ENCODE measurements at regions of chr15 and their contacts with region 1.

Region 1: DNA sequence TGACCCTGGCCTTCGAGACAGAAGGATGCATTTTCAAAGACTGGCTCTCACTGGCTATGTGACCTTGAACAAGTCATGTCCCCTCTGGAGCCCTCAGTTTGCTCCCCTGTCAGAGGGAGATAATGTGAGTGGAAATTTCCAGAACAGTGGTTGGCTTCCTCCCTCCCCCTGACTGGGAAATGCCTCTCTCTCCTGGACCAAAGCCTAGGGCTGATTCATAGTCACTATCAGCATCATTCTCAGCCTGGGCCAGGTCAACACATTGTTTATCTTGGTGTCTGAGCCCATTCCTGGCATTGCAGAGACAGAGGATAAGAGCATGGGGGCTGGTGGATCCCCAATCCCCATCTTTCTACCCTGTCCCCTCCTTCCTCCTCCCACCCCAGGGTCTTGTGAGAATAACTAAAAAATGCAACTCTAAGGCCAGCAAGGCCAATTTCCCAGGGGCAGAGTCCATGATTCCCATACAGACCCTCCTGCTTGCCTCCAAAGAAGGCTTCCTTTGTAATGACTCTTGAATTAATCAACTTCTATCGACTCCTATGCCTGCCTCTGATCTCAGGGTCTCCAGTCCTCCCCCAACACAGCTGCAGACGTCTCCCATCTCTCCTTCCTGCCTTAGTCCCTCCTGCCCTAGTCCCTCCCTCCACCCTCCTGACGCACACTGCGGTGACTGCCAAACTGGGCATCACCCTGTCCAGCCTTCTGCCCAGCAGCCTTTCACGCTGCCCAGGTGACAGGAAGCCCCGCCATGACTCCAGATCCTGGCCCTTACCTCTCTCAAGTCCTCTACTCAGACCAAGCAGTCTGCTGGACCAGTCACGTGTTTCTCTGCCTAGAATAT is 35.4 kb upstream of the CORO2B start:
- DNase-seq: peak; percentile 73
- ATAC-seq: peak; percentile 89
- H3K4me3 ChIP-seq: no peak overlapping the region
- H3K27ac ChIP-seq: peak overlapping the region in 1 of 2 donors; percentile 52
- H3K4me1 ChIP-seq: peaks cover 3 to 5% of the 10 kb centered on the region in 2 donors
- H3K27me3 ChIP-seq: no peaks in the 10 kb centered on the region

Region 2: GRCh38 chr15:68484696-68485400 is 58.5 kb before region 1 on chr15:
- intact Hi-C with region 1: loop called in 1 of 2 experiments (anchors 5 kb)
- DNase-seq: peak; percentile 80 to 84
- ATAC-seq: peak; percentile 80
- H3K4me3 ChIP-seq: no peak overlapping the region
- H3K27ac ChIP-seq: peak overlapping the region; percentile 95 to 99
- H3K4me1 ChIP-seq: peaks cover 12 to 13% of the 10 kb centered on the region in 2 donors
- H3K27me3 ChIP-seq: no peaks in the 10 kb centered on the region

Region 3: DNA sequence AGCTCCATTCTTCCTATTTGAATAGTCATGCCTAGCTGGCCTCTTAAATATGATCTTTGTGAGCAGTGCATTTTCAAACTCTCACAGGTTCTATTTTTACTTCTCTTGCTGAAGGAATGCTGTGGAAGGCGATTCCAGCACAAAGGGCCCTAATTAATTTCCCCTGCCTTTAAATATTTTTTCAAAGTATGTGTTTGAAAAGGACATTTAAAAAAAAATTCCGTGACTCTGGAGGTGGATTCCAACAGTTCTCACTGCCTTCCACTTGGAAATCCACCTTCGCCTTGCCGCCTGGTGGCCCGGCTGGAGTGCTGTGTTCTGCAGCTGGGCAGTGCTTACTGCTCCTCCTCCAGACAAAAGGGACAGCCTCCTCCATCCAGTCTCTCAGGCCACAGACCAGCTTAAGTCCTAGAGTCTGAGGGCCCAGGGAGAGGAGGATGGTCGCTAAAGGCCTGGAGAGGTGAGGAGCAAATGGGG is 26.1 kb before region 1 on chr15:
- intact Hi-C with region 1: no loop called
- DNase-seq: peak; percentile 74 to 87
- ATAC-seq: peak; percentile 80
- H3K4me3 ChIP-seq: no peak overlapping the region
- H3K27ac ChIP-seq: peak overlapping the region; percentile 92 to 98
- H3K4me1 ChIP-seq: peaks cover 3 to 11% of the 10 kb centered on the region in 2 donors
- H3K27me3 ChIP-seq: no peaks in the 10 kb centered on the region

Region 4: DNA sequence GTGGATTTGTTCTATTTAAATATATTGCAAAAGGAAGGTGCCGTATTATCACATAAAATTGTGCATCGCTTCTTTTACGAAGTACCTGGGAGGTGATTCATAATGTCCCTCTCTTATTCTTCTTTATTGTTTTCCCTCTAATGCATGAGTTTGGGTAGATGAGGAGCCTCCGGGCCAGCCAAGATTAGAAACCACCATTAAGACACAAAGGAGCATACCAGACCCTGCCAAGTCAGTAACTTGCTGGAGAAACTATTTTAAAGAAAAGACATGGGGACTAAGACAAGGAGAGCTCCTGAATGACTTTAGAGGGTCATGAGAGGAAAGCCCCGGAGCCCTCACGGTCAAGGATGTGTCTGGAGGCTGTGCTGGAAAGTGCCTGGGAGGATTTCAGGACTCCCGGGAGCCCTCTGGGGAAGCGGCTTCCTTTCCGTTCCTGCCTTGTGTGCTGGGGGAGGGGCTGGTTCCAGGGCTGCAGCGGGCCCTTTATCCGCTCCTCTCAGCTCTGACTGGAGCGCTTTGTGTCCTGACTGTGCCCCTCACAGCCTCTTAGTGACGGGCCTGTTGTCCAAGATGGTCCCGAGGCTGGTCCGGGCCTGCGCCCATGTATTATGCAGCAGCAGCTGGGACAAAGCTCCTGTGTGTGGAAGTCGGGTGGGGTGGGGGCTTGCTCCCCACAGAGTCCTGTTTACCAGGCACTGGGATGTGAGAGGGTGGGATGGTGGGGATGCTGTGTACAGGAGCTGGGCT is 71.1 kb after region 1 on chr15:
- intact Hi-C with region 1: no loop called
- DNase-seq: no peak
- ATAC-seq: no peak
- H3K4me3 ChIP-seq: no peak overlapping the region
- H3K27ac ChIP-seq: no peak overlapping the region
- H3K4me1 ChIP-seq: no peaks in the 10 kb centered on the region
- H3K27me3 ChIP-seq: no peaks in the 10 kb centered on the region

Region 5: GRCh38 chr15:68631601-68632051 is 88.2 kb after region 1 on chr15:
- intact Hi-C with region 1: no loop called
- DNase-seq: no peak
- ATAC-seq: no peak
- H3K4me3 ChIP-seq: no peak overlapping the region
- H3K27ac ChIP-seq: no peak overlapping the region
- H3K4me1 ChIP-seq: no peaks in the 10 kb centered on the region
- H3K27me3 ChIP-seq: no peaks in the 10 kb centered on the region

Measured in aorta (tissue), 5 donors.